Activated CD4-positive, alpha-beta T cell treated with anti-CD3 and anti-CD28 coated beads for 36 hours (primary cell): ENCODE measurements at regions of chr2 and their contacts with region 1.

Region 1: DNA sequence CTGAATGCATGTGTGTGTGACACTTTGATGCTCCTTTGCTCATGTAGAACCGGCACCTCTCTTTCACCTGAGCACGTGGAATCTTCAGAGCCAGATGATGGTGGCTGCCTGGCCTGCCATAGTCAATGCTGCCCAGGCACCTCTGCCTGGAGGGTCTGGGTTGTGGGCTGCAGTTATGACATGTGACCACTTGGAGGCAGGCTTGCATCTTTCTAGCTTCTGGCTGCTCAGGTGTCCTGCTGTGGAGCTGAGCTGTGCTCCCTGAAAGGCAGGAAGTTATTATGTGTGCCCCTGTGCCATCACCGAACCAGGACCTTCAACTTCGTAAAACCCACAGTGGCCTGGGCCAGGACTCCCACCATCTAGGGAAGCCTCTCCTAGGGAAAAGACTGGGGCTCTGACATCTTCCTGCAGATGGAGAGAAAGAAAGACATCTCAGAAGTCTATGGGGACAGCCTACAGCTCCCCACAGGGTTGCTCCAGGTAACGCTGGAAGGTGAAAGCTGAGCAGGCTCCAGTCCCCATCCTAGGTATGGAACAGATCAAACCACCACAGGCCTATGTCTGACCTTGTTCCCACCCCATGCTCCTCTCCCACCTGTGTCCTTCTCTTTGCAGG is 30.2 kb downstream of the PSD4 start:
- DNase-seq: peak; percentile 85
- ATAC-seq: peak; percentile 83
- H3K4me3 Mint-ChIP-seq: no peak overlapping the region
- H3K27ac Mint-ChIP-seq: peak overlapping the region; percentile 63
- H3K4me1 Mint-ChIP-seq: peaks cover 18% of the 10 kb centered on the region
- H3K27me3 Mint-ChIP-seq: no peaks in the 10 kb centered on the region

Region 2: DNA sequence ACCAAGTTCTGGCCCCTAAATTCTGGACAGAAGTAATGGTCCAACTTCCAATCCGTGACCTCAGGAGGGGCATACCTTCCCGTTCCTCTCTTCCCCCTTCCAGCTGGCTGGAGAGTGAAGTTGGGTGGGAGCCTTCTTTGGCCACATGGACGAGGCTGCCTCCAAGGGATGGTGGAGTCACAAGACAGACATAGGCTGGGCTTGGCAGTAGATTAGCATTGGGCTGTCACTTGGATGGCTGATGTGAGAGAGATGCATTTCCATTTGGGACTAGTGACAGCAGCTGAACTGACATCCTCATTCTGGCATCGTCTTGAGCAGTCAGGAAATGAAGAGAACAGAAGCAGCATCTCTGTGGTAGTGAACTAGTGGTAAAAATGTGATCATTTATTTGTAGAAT is 470.6 kb before region 1 on chr2:
- CTCF ChIA-PET with region 1: no interaction called
- POLR2A ChIA-PET with region 1: no interaction called
- intact Hi-C with region 1: no loop called
- DNase-seq: no peak
- ATAC-seq: no peak
- H3K4me3 Mint-ChIP-seq: no peak overlapping the region
- H3K27ac Mint-ChIP-seq: no peak overlapping the region
- H3K4me1 Mint-ChIP-seq: peaks cover 4% of the 10 kb centered on the region
- H3K27me3 Mint-ChIP-seq: no peaks in the 10 kb centered on the region

Region 3: DNA sequence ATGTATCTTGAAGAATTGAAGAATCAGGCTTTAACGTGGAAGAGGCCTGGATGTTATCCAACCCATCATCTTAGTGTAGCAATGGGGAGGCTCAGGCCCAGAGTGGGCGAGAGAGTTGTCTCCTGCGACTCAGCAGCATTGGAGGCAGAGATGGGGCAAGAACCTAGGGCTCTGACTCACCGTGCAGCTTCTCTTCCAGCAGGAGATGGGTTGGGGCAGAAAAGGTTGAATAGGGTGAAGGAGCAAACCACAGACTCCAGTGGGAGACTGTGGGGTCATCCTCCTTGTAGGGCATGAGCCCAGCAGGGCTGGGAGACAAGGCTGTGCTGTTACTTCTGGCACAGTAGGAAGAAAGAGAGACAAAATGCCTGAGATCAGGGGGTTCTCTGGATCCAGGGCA is 143.6 kb before region 1 on chr2:
- CTCF ChIA-PET with region 1: no interaction called
- POLR2A ChIA-PET with region 1: no interaction called
- intact Hi-C with region 1: no loop called
- DNase-seq: no peak
- ATAC-seq: no peak
- H3K4me3 Mint-ChIP-seq: no peak overlapping the region
- H3K27ac Mint-ChIP-seq: no peak overlapping the region
- H3K4me1 Mint-ChIP-seq: peaks cover 6% of the 10 kb centered on the region
- H3K27me3 Mint-ChIP-seq: peaks cover 2% of the 10 kb centered on the region

Region 4: DNA sequence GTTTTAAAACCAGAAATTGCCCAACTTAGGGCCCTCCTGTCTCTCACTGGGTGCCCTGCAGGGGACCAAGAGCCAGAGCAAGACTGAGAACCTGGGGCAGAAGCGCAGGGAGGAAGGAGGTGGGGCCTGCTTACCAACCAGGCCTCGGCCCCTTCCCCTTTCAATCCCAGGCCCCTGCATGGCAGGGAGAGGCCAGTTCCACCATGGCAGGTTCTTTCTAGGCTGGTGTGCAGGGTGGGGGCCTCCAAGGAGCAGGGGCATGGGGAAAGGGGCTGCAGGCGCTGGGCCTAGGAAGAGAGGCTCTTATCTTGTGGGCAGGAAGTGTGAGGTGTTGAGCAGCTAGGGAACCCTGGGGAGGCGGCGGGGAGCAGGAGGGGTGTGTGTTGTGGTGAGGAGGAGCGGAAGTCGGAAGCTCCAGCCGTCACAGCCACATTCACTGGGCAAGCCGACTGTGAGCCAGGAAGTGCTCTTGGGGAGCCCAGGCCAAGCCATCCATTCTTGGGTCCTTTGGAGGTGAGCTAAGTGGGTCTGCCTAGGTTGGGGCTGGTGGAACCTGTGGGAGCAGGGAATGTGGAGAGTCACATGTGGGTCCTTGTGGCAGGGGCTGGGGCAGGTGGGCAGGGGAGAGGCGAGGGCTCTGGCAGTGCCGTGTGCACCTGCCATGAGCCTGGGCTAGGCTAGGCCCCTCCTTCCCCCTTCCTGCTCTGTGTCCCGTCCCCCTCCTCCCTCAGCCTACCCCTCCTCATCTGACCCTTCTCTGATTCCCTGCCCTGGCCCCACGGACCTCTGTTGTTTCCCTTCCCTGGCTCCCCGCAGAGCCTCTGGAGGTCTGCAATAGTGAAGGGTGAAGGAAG is 30.2 kb before region 1 on chr2 and contains the start of gene PSD4:
- CTCF ChIA-PET with region 1: interaction called, 24 read pairs
- POLR2A ChIA-PET with region 1: interaction called, 8 read pairs
- intact Hi-C with region 1: loop called in 1 of 2 experiments (anchors 1 kb)
- DNase-seq: peak; percentile 95
- ATAC-seq: peak; percentile 81
- H3K4me3 Mint-ChIP-seq: peak within 1 kb of the TSS; percentile 91
- H3K27ac Mint-ChIP-seq: peak within 1 kb of the TSS; percentile 99
- H3K4me1 Mint-ChIP-seq: peaks cover 73% of the 10 kb centered on the region
- H3K27me3 Mint-ChIP-seq: no peaks in the 10 kb centered on the region
- total RNA-seq, gene PSD4: 232 to 274 TPM

Region 5: GRCh38 chr2:113219889-113220641 is 16.1 kb after region 1 on chr2:
- CTCF ChIA-PET with region 1: interaction called, 11 read pairs
- POLR2A ChIA-PET with region 1: interaction called, 6 read pairs
- intact Hi-C with region 1: no loop called
- DNase-seq: no peak
- ATAC-seq: peak; percentile 58
- H3K4me3 Mint-ChIP-seq: no peak overlapping the region
- H3K27ac Mint-ChIP-seq: no peak overlapping the region
- H3K4me1 Mint-ChIP-seq: peaks cover 16% of the 10 kb centered on the region
- H3K27me3 Mint-ChIP-seq: peaks cover 2% of the 10 kb centered on the region

Region 6: DNA sequence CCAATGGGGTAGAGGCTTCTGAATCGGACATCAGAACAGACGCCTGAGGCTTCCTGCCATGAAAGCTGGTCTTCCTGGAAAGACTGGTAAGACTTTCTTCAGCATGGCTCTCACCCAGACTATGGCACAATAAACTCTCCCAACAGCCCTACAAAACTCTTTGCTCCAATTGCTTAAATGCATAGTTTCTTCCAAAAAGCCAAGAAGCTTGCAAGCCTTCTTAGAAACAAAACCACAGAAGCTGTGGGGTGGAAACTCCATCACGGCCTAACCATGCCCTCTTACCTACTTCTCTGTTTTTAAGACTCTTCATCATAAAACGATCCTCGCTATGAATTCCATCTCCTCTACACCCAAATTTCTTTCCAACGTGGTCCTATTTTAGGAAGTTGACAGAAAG is 26.5 kb after region 1 on chr2:
- CTCF ChIA-PET with region 1: interaction called, 11 read pairs
- POLR2A ChIA-PET with region 1: no interaction called
- intact Hi-C with region 1: no loop called
- DNase-seq: no peak
- ATAC-seq: peak; percentile 13
- H3K4me3 Mint-ChIP-seq: no peak overlapping the region
- H3K27ac Mint-ChIP-seq: no peak overlapping the region
- H3K4me1 Mint-ChIP-seq: peaks cover 8% of the 10 kb centered on the region
- H3K27me3 Mint-ChIP-seq: no peaks in the 10 kb centered on the region

Region 7: DNA sequence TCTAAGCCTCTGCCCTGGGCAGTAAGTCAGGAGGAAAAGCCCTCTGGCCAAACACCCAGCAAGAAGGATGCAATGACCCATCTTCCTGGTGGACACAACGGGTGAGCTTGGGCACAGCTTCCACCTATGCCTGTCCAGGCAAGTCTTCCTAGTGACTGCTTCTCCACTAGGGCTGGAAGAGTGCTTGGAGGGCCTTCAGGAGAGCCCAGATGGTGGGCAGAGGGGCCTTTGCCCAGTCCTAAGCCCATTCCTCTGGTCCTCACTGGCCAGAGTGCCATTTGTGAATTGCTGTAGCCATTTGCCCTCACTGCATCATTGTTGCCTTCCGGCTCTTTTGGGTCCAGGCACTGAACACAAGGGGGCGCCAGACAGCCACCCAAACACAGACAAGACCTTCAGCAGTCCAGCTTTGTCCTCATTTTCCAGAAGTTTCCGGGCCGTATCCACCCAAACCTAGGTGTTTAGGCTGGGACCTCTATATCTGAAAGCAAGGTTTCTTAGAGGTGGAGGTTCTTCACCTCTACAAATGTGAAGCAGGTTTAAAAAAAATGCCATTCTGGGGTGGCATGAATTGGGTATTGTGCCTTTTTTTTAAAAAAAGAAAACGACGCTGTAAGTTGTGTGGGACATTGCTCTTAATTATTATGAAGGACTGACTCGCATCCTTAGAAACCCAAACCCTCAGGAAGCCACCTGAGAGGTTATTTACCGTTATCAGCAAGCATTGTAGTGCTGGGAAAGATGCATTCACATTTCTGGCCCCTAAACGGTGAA is 45.2 kb after region 1 on chr2:
- CTCF ChIA-PET with region 1: interaction called, 11 read pairs
- POLR2A ChIA-PET with region 1: no interaction called
- intact Hi-C with region 1: loop called in 1 of 2 experiments (anchors 1 kb)
- DNase-seq: peak; percentile 88
- ATAC-seq: peak; percentile 77
- H3K4me3 Mint-ChIP-seq: no peak overlapping the region
- H3K27ac Mint-ChIP-seq: no peak overlapping the region
- H3K4me1 Mint-ChIP-seq: peaks cover 44% of the 10 kb centered on the region
- H3K27me3 Mint-ChIP-seq: no peaks in the 10 kb centered on the region

Region 8: GRCh38 chr2:113370478-113371091 is 166.6 kb after region 1 on chr2:
- CTCF ChIA-PET with region 1: interaction called, 6 read pairs
- POLR2A ChIA-PET with region 1: no interaction called
- intact Hi-C with region 1: loop called (anchors 1 kb)
- DNase-seq: peak; percentile 78
- ATAC-seq: peak; percentile 98
- H3K4me3 Mint-ChIP-seq: no peak overlapping the region
- H3K27ac Mint-ChIP-seq: no peak overlapping the region
- H3K4me1 Mint-ChIP-seq: peaks cover 7% of the 10 kb centered on the region
- H3K27me3 Mint-ChIP-seq: peaks cover 2% of the 10 kb centered on the region

Region 9: GRCh38 chr2:113390124-113390849 is 186.3 kb after region 1 on chr2:
- CTCF ChIA-PET with region 1: interaction called, 8 read pairs
- POLR2A ChIA-PET with region 1: no interaction called
- intact Hi-C with region 1: loop called in 1 of 2 experiments (anchors 1 kb)
- DNase-seq: peak; percentile 71
- ATAC-seq: peak; percentile 85
- H3K4me3 Mint-ChIP-seq: peak overlapping the region; percentile 52
- H3K27ac Mint-ChIP-seq: peak overlapping the region; percentile 27
- H3K4me1 Mint-ChIP-seq: peaks cover 12% of the 10 kb centered on the region
- H3K27me3 Mint-ChIP-seq: peaks cover 5% of the 10 kb centered on the region